HCT116 (cell line): ENCODE measurements at regions of chr16 and their contacts with region 1.

Region 1: GRCh38 chr16:13463619-13464018 is 456.3 kb upstream of the ERCC4 start:
- DNase-seq: no peak
- ATAC-seq: no peak
- H3K4me3 ChIP-seq: no peak overlapping the region
- H3K27ac ChIP-seq: no peak overlapping the region
- H3K4me1 ChIP-seq: no peaks in the 10 kb centered on the region
- H3K27me3 ChIP-seq: no peaks in the 10 kb centered on the region
- CTCF ChIP-seq: no peak
- POLR2A ChIP-seq: no peak
- RAD21 ChIP-seq: no peak

Region 2: DNA sequence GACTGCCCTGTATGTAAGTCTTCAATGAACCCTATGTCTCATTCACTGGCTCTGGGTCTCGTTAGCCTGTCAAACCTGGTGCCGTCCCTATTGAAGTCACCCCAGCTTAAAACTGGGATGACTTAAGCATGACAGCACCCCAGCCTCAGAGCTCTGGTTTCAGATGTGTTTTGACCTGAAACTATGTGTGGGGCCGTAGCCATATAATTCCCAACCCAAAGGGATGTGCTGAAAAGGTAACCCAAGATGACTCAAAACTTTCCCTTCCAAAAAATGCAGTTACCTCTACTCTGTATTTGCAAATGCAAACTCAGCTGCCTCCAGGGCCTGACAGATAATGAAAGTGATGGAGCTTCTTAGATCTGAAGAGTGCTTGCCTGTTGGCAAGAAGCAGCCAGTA is 21.9 kb before region 1 on chr16:
- CTCF ChIA-PET with region 1: no interaction called
- POLR2A ChIA-PET with region 1: no interaction called
- RAD21 ChIA-PET with region 1: no interaction called
- intact Hi-C with region 1: loop called (anchors 2 kb)
- DNase-seq: no peak
- ATAC-seq: no peak
- H3K4me3 ChIP-seq: no peak overlapping the region
- H3K27ac ChIP-seq: no peak overlapping the region
- H3K4me1 ChIP-seq: no peaks in the 10 kb centered on the region
- H3K27me3 ChIP-seq: no peaks in the 10 kb centered on the region
- CTCF ChIP-seq: no peak
- POLR2A ChIP-seq: no peak
- RAD21 ChIP-seq: no peak